ENCODE measurements at regions of chr14 and their contacts with region 1.

Region 1: GRCh38 chr14:49971156-49972130 is 78.6 kb downstream of the ARF6 start:
- DNase-seq: peak; percentile 89
- ATAC-seq: peak; percentile 90
- H3K4me3 ChIP-seq: peak overlapping the region; percentile 49
- H3K27ac ChIP-seq: peak overlapping the region; percentile 100
- H3K4me1 ChIP-seq: peaks cover 39% of the 10 kb centered on the region
- H3K27me3 ChIP-seq: no peaks in the 10 kb centered on the region
- CTCF ChIP-seq: no peak
- EP300 ChIP-seq: peak; percentile 90 to 95
- POLR2A ChIP-seq: peak; percentile 24; the same call in 1 of the 2 replicates
- RAD21 ChIP-seq: no peak

Region 2: GRCh38 chr14:49808780-49809179 is 162.7 kb before region 1 on chr14:
- CTCF ChIA-PET with region 1: no interaction called
- POLR2A ChIA-PET with region 1: interaction called, 10 read pairs
- RAD21 ChIA-PET with region 1: no interaction called
- SMC1A ChIA-PET with region 1: no interaction called
- in situ Hi-C with region 1: no loop called
- intact Hi-C with region 1: no loop called
- DNase-seq: no peak
- ATAC-seq: no peak
- H3K4me3 ChIP-seq: no peak overlapping the region
- H3K27ac ChIP-seq: no peak overlapping the region
- H3K4me1 ChIP-seq: no peaks in the 10 kb centered on the region
- H3K27me3 ChIP-seq: no peaks in the 10 kb centered on the region
- CTCF ChIP-seq: no peak
- EP300 ChIP-seq: no peak
- POLR2A ChIP-seq: no peak
- RAD21 ChIP-seq: no peak

Region 3: DNA sequence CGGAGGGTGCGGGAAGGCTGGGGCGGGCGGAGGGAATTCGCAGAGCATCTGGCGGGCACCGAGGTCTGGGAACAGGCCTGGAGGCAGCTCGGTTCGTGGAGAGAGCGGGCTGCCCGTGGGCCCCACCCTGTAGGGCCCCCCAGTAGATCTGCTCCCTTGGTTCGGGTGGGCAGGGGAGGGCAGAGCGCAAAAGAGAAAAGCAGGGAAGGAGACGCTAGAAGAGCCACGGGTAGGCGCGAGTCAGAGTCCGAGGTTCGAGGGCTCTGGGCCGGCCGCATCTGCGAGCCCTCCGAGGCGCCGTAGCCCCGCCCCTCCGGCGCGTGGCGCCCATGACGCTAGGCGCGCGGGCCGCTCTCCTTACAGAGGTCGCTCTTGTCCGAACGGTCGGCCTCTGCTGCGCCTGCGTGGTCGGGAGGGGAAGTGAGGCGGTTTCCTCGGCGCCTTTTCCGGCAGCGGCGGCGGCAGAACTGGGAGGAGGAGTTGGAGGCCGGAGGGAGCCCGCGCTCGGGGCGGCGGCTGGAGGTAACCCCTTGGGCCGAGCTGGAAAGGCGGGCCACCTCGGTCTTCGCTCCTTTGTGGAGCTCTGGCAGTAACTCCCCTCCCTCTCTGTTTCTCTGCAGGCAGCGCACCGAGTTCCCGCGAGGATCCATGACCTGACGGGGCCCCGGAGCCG is 78.7 kb before region 1 on chr14 and contains the start of gene ARF6:
- CTCF ChIA-PET with region 1: interaction called, 3 read pairs
- POLR2A ChIA-PET with region 1: interaction called, 6 read pairs
- RAD21 ChIA-PET with region 1: interaction called, 7 read pairs
- SMC1A ChIA-PET with region 1: interaction called, 13 read pairs
- in situ Hi-C with region 1: no loop called
- intact Hi-C with region 1: loop called (anchors 2 kb)
- DNase-seq: peak; percentile 81
- ATAC-seq: peak; percentile 83
- H3K4me3 ChIP-seq: peak within 1 kb of the TSS; percentile 97
- H3K27ac ChIP-seq: peak within 1 kb of the TSS; percentile 100
- H3K4me1 ChIP-seq: peaks cover 5% of the 10 kb centered on the region
- H3K27me3 ChIP-seq: no peaks in the 10 kb centered on the region
- CTCF ChIP-seq: peak in 2 of 3 experiments; percentile 15 to 29; a peak in 1 of 6 replicates
- EP300 ChIP-seq: no peak
- POLR2A ChIP-seq: peak; percentile 92
- RAD21 ChIP-seq: 0 out of 2 replicates have a peak, but pooled peaks have one; percentile 10
- polyA plus RNA-seq, gene ARF6: 46.8 to 86.6 TPM

Region 4: GRCh38 chr14:49950275-49951228 is 20.9 kb before region 1 on chr14:
- CTCF ChIA-PET with region 1: interaction called, 10 read pairs
- POLR2A ChIA-PET with region 1: interaction called, 16 read pairs
- RAD21 ChIA-PET with region 1: interaction called, 15 read pairs
- SMC1A ChIA-PET with region 1: interaction called, 17 read pairs
- in situ Hi-C with region 1: no loop called
- intact Hi-C with region 1: no loop called
- DNase-seq: no peak
- ATAC-seq: peak; percentile 62
- H3K4me3 ChIP-seq: no peak overlapping the region
- H3K27ac ChIP-seq: no peak overlapping the region
- H3K4me1 ChIP-seq: peaks cover 5% of the 10 kb centered on the region; the same call in 1 of the 2 replicates
- H3K27me3 ChIP-seq: no peaks in the 10 kb centered on the region
- CTCF ChIP-seq: no peak
- EP300 ChIP-seq: no peak
- POLR2A ChIP-seq: no peak
- RAD21 ChIP-seq: no peak

Region 5: DNA sequence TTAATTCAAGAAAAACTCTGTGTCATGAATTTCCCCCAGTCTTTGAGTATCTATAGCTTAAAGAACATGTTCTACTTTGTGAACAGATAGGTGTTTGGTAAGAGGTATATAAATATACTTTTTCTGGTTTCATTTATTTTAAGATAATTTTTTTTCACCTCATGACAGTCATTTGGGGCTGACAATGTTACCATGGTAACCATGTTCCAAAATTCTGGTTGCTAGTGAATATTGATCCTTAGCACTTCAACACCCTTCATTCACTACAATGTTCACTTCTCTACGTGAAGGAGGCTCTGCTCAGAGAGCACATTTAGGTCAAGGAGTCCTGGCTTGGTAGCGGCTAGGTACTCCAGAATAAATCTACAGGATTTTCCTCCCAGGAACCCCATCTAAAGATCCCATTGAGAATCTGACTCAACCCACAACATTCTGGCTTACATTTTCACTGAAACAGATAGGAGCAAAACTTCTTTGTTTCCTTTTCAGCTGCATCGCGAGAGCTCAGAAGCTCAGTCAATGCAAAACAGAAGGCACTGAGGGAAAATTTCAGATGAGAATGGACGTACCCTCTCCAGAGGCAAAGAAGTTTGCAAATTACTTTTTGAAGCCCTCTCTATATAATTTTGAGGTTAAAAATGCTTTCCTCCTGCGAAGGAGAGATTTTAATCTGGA is 15.0 kb after region 1 on chr14:
- CTCF ChIA-PET with region 1: interaction called, 6 read pairs
- POLR2A ChIA-PET with region 1: interaction called, 11 read pairs
- RAD21 ChIA-PET with region 1: interaction called, 7 read pairs
- SMC1A ChIA-PET with region 1: interaction called, 72 read pairs
- in situ Hi-C with region 1: no loop called
- intact Hi-C with region 1: no loop called
- DNase-seq: no peak
- ATAC-seq: no peak
- H3K4me3 ChIP-seq: no peak overlapping the region
- H3K27ac ChIP-seq: no peak overlapping the region
- H3K4me1 ChIP-seq: no peaks in the 10 kb centered on the region
- H3K27me3 ChIP-seq: no peaks in the 10 kb centered on the region
- CTCF ChIP-seq: no peak
- EP300 ChIP-seq: no peak
- POLR2A ChIP-seq: no peak
- RAD21 ChIP-seq: no peak

Region 6: GRCh38 chr14:50060871-50061663 is 89.6 kb after region 1 on chr14:
- CTCF ChIA-PET with region 1: interaction called, 13 read pairs
- POLR2A ChIA-PET with region 1: interaction called, 7 read pairs
- RAD21 ChIA-PET with region 1: interaction called, 31 read pairs
- SMC1A ChIA-PET with region 1: interaction called, 8 read pairs
- in situ Hi-C with region 1: no loop called
- intact Hi-C with region 1: no loop called
- DNase-seq: no peak
- ATAC-seq: peak; percentile 51
- H3K4me3 ChIP-seq: 0 out of 2 replicates have a peak overlapping the region, but pooled peaks have one; percentile 25
- H3K27ac ChIP-seq: peak overlapping the region; percentile 98
- H3K4me1 ChIP-seq: peaks cover 53% of the 10 kb centered on the region
- H3K27me3 ChIP-seq: no peaks in the 10 kb centered on the region
- CTCF ChIP-seq: no peak
- EP300 ChIP-seq: peak in 1 of 2 experiments; percentile 66; a peak in 2 of 4 replicates
- POLR2A ChIP-seq: no peak
- RAD21 ChIP-seq: peak; percentile 32; the same call in 1 of the 2 replicates

Measured in GM12878 (cell line).